Naive thymus-derived CD4-positive, alpha-beta T cell (primary cell): ENCODE measurements at regions of chr15 and their contacts with region 1.

Region 1: GRCh38 chr15:78437762-78438302 is at the start of gene IREB2:
- DNase-seq: peak; percentile 94 to 99 (median 98)
- ATAC-seq: peak; percentile 96
- H3K4me3 ChIP-seq: peak within 1 kb of the TSS; percentile 69
- H3K4me3 Mint-ChIP-seq: peak within 1 kb of the TSS; percentile 89 to 100 (median 97)
- H3K27ac ChIP-seq: peak within 1 kb of the TSS; percentile 94
- H3K27ac Mint-ChIP-seq: peak within 1 kb of the TSS; percentile 96 to 100 (median 99)
- H3K4me1 ChIP-seq: peaks cover 32 to 36% of the 10 kb centered on the region in 2 donors
- H3K4me1 Mint-ChIP-seq: peaks cover 29 to 56% (median 51%) of the 10 kb centered on the region in 7 donors
- H3K27me3 ChIP-seq: no peaks in the 10 kb centered on the region
- H3K27me3 Mint-ChIP-seq: peaks cover 0 to 2% (median 0%) of the 10 kb centered on the region in 5 donors
- total RNA-seq, gene IREB2: 64.1 to 79.8 (median 69.5) TPM

Region 2: GRCh38 chr15:77538027-77538451 is 899.8 kb before region 1 on chr15:
- CTCF ChIA-PET with region 1: no interaction called
- POLR2A ChIA-PET with region 1: no interaction called
- intact Hi-C with region 1: no loop called
- DNase-seq: no peak
- ATAC-seq: no peak
- H3K4me3 ChIP-seq: no peak overlapping the region
- H3K4me3 Mint-ChIP-seq: no peak overlapping the region
- H3K27ac ChIP-seq: no peak overlapping the region
- H3K27ac Mint-ChIP-seq: no peak overlapping the region
- H3K4me1 ChIP-seq: peaks cover 4 to 5% of the 10 kb centered on the region in 2 donors
- H3K4me1 Mint-ChIP-seq: peaks cover 0 to 11% (median 6%) of the 10 kb centered on the region in 7 donors
- H3K27me3 ChIP-seq: no peaks in the 10 kb centered on the region
- H3K27me3 Mint-ChIP-seq: peaks cover 0 to 13% (median 6%) of the 10 kb centered on the region in 5 donors

Region 3: DNA sequence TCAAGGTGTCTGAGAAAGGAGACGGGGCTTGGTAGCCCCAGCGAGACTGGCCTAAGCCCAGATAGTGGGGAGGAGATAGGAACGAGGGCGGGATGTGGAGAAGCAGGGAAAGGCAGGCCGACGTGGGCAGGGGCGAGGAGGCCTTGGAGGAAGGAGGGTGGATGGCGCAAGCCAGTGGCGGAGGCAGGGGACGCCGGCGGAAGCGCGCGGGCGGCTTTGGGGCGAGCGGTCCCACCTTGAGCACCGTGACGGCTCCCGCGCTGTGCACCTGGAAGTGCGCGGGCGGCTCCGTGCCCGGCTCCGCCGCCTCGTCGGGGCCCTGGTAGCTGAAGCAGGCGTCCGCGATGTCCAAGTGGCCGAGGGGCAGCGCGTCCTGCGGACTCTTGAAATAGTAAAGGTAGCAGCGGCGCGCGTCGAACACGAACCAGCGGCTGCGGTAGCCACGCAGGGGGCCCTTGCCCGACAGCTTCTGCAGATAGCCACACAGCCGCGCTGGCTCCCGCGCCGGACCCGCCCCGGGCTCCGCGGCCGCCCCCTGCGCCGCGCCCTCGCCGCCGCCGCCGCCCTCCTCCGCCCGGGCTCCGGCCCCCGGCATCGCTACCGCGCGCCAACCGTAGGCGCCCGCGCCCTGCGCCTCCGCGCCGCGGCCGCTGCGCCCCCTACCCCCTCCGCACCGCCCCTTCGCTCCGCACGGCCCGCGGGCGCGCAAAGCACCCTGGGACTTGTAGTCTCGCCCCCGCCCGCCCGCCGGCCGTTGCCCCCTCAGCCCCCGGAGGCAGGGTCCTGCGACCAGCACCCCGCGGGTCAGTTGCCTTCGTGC is 360.6 kb before region 1 on chr15 and contains the start of gene TBC1D2B:
- CTCF ChIA-PET with region 1: no interaction called
- POLR2A ChIA-PET with region 1: no interaction called
- intact Hi-C with region 1: loop called (anchors 1 to 5 kb)
- DNase-seq: peak; percentile 51 to 79 (median 65)
- ATAC-seq: peak; percentile 90
- H3K4me3 ChIP-seq: peak within 1 kb of the TSS; percentile 98
- H3K4me3 Mint-ChIP-seq: peak within 1 kb of the TSS; percentile 92 to 100 (median 98)
- H3K27ac ChIP-seq: peak within 1 kb of the TSS; percentile 70
- H3K27ac Mint-ChIP-seq: peak within 1 kb of the TSS; percentile 88 to 98 (median 95)
- H3K4me1 ChIP-seq: peaks cover 33 to 34% of the 10 kb centered on the region in 2 donors
- H3K4me1 Mint-ChIP-seq: peaks cover 36 to 56% (median 46%) of the 10 kb centered on the region in 7 donors
- H3K27me3 ChIP-seq: no peaks in the 10 kb centered on the region
- H3K27me3 Mint-ChIP-seq: no peaks in the 10 kb centered on the region
- total RNA-seq, gene TBC1D2B: 69.7 to 119 (median 86.1) TPM

Region 4: DNA sequence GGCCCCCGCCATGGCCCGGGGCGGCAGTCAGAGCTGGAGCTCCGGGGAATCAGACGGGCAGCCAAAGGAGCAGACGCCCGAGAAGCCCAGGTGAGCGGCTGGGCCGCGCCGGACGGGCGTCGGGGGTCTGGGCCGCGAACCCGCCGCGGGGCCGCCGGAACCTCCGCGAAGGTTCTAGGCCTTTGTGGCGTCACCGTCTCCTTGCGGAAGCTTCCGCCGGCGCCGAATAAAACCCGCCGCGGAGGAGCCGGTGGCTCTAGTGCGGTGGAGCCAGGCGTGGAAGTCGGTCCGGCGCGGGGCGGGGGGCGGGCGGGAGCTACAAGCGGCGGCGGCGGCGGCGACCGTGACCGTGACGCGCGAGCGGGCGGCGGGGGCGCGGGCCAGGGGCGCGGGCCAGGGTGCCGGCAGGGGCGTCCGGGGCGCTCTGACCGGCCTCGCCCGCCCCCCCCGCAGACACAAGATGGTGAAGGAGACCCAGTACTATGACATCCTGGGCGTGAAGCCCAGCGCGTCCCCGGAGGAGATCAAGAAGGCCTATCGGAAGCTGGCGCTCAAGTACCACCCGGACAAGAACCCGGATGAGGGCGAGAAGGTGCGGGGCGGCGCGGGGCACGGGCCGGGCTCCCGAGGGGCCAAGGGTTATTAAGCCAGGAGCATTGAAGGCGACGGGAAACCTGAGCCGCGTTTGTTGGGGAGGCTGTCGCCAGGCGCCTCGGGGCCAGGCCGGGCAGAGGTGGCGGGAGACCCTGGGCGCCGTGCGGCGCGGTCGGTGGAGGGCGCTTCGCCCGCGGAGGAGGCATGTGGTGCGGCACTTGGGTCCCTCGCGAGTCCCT is 173.3 kb before region 1 on chr15 and contains the start of gene DNAJA4:
- CTCF ChIA-PET with region 1: no interaction called
- POLR2A ChIA-PET with region 1: interaction called, 26 read pairs
- intact Hi-C with region 1: no loop called
- DNase-seq: peak; percentile 60 to 74 (median 68)
- ATAC-seq: peak; percentile 82
- H3K4me3 ChIP-seq: peak within 1 kb of the TSS; percentile 74
- H3K4me3 Mint-ChIP-seq: peak within 1 kb of the TSS; percentile 81 to 94 (median 90)
- H3K27ac ChIP-seq: peak within 1 kb of the TSS; percentile 83
- H3K27ac Mint-ChIP-seq: peak within 1 kb of the TSS; percentile 87 to 96 (median 92)
- H3K4me1 ChIP-seq: peaks cover 13 to 18% of the 10 kb centered on the region in 2 donors
- H3K4me1 Mint-ChIP-seq: peaks cover 25 to 48% (median 34%) of the 10 kb centered on the region in 7 donors
- H3K27me3 ChIP-seq: no peaks in the 10 kb centered on the region
- H3K27me3 Mint-ChIP-seq: no peaks in the 10 kb centered on the region
- total RNA-seq, gene DNAJA4: 28.3 to 44.7 (median 38.1) TPM

Region 5: GRCh38 chr15:78422571-78423340 is 15.1 kb before region 1 on chr15:
- CTCF ChIA-PET with region 1: interaction called, 8 read pairs
- POLR2A ChIA-PET with region 1: interaction called, 10 read pairs
- intact Hi-C with region 1: no loop called
- DNase-seq: peak; percentile 34 to 62 (median 54)
- ATAC-seq: peak; percentile 94
- H3K4me3 ChIP-seq: no peak overlapping the region
- H3K4me3 Mint-ChIP-seq: no peak overlapping the region
- H3K27ac ChIP-seq: no peak overlapping the region
- H3K27ac Mint-ChIP-seq: no peak overlapping the region
- H3K4me1 ChIP-seq: no peaks in the 10 kb centered on the region
- H3K4me1 Mint-ChIP-seq: peaks cover 9 to 19% (median 15%) of the 10 kb centered on the region in 7 donors
- H3K27me3 ChIP-seq: peaks cover 0 to 4% of the 10 kb centered on the region in 2 donors
- H3K27me3 Mint-ChIP-seq: peaks cover 5 to 17% (median 11%) of the 10 kb centered on the region in 5 donors

Region 6: DNA sequence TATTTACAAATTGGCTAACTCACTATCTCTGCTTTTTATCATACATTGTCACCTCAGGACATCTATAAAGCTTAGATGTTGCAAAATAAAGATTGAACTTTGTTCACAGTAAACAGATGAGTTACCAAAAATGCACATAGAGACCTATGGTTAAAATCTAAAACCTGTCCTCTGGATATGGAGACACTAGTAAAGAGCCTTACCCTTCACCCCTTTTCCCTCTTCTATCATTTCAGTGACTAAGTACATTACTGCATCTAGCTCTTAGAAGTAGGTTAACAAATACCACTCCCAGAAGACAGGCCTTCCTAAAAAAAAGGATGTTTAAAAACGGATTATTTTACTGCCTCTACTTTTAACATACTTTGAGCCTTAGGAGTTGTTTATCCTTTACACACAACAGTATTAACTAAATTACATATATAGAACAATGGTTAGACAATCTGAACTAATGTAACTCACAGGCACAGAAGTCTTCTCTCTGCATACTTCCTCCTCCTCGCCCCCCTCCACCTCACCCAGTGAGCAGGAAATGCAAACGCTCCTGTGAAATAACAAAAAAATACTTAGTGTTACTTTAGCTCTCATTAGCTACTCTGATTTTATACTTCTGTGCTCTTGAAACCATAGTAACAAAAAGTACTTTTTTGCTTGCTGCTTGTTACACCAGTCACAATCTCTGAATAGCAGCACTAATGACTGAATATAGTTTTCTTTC is 23.5 kb after region 1 on chr15:
- CTCF ChIA-PET with region 1: no interaction called
- POLR2A ChIA-PET with region 1: interaction called, 27 read pairs
- intact Hi-C with region 1: loop called in 1 of 2 experiments (anchors 2 kb)
- DNase-seq: peak in 6 of 9 donors; percentile 13 to 48 (median 26)
- ATAC-seq: peak; percentile 86
- H3K4me3 ChIP-seq: no peak overlapping the region
- H3K4me3 Mint-ChIP-seq: peak overlapping the region in 8 of 10 donors; percentile 6 to 68 (median 49)
- H3K27ac ChIP-seq: peak overlapping the region; percentile 30
- H3K27ac Mint-ChIP-seq: peak overlapping the region; percentile 19 to 68 (median 59)
- H3K4me1 ChIP-seq: peaks cover 7 to 13% of the 10 kb centered on the region in 2 donors
- H3K4me1 Mint-ChIP-seq: peaks cover 34 to 71% (median 57%) of the 10 kb centered on the region in 7 donors
- H3K27me3 ChIP-seq: no peaks in the 10 kb centered on the region
- H3K27me3 Mint-ChIP-seq: no peaks in the 10 kb centered on the region

Region 7: GRCh38 chr15:78540141-78540928 is 102.5 kb after region 1 on chr15 and contains the start of gene PSMA4:
- CTCF ChIA-PET with region 1: interaction called, 3 read pairs
- POLR2A ChIA-PET with region 1: interaction called, 43 read pairs
- intact Hi-C with region 1: loop called (anchors 1 kb)
- DNase-seq: peak; percentile 89 to 97 (median 95)
- ATAC-seq: peak; percentile 93
- H3K4me3 ChIP-seq: peak within 1 kb of the TSS; percentile 89
- H3K4me3 Mint-ChIP-seq: peak within 1 kb of the TSS; percentile 86 to 99 (median 92)
- H3K27ac ChIP-seq: peak within 1 kb of the TSS; percentile 99
- H3K27ac Mint-ChIP-seq: peak within 1 kb of the TSS; percentile 91 to 100 (median 99)
- H3K4me1 ChIP-seq: peaks cover 19 to 23% of the 10 kb centered on the region in 2 donors
- H3K4me1 Mint-ChIP-seq: peaks cover 18 to 47% (median 35%) of the 10 kb centered on the region in 7 donors
- H3K27me3 ChIP-seq: no peaks in the 10 kb centered on the region
- H3K27me3 Mint-ChIP-seq: peaks cover 0 to 4% (median 0%) of the 10 kb centered on the region in 5 donors
- total RNA-seq, gene PSMA4: 69.6 to 284 (median 79.9) TPM

Region 8: GRCh38 chr15:78872972-78873792 is 435.4 kb after region 1 on chr15:
- CTCF ChIA-PET with region 1: no interaction called
- POLR2A ChIA-PET with region 1: interaction called, 11 read pairs
- intact Hi-C with region 1: loop called in 1 of 2 experiments (anchors 2 kb)
- DNase-seq: peak; percentile 75 to 91 (median 90)
- ATAC-seq: peak; percentile 79
- H3K4me3 ChIP-seq: peak overlapping the region; percentile 100
- H3K4me3 Mint-ChIP-seq: peak overlapping the region; percentile 94 to 100 (median 99)
- H3K27ac ChIP-seq: peak overlapping the region; percentile 100
- H3K27ac Mint-ChIP-seq: peak overlapping the region; percentile 100
- H3K4me1 ChIP-seq: peaks cover 37 to 38% of the 10 kb centered on the region in 2 donors
- H3K4me1 Mint-ChIP-seq: peaks cover 29 to 54% (median 45%) of the 10 kb centered on the region in 7 donors
- H3K27me3 ChIP-seq: no peaks in the 10 kb centered on the region
- H3K27me3 Mint-ChIP-seq: no peaks in the 10 kb centered on the region